ENCODE measurements at regions of chr22 and their contacts with region 1.

Region 1: DNA sequence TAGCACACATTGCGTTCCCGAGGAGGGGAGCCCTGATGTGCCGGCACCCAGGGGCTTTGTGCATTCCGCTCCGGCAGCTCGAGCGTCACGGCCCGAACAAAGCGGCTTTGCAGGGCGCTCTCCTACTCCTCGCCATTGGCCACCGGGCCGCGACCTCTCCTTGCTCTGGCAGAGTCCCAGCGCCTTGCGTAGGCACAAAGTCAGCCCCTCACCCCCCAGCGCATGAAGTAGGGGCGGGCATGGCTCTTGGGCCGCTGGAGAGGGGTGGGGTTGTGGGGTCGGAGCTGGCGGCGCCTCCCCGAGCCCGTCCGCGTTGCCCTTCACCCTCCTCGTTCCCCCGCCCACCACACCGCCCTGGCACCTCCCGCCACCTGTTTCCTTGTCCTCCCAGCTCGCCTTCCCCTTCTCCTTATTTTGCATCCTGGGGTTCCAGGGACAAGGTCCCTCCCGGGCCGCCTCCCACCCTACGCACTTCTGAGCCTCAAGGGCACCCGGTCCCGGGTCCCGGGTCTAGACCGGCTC is 753 bp upstream of the PPARA start:
- DNase-seq: no peak

Region 2: GRCh38 chr22:45977003-45977411 is 172.6 kb before region 1 on chr22 and contains the start of gene WNT7B:
- in situ Hi-C with region 1: no loop called
- DNase-seq: peak; percentile 84
- total RNA-seq, gene WNT7B: 89.1 and 95.0 TPM in 2 replicates

Region 3: DNA sequence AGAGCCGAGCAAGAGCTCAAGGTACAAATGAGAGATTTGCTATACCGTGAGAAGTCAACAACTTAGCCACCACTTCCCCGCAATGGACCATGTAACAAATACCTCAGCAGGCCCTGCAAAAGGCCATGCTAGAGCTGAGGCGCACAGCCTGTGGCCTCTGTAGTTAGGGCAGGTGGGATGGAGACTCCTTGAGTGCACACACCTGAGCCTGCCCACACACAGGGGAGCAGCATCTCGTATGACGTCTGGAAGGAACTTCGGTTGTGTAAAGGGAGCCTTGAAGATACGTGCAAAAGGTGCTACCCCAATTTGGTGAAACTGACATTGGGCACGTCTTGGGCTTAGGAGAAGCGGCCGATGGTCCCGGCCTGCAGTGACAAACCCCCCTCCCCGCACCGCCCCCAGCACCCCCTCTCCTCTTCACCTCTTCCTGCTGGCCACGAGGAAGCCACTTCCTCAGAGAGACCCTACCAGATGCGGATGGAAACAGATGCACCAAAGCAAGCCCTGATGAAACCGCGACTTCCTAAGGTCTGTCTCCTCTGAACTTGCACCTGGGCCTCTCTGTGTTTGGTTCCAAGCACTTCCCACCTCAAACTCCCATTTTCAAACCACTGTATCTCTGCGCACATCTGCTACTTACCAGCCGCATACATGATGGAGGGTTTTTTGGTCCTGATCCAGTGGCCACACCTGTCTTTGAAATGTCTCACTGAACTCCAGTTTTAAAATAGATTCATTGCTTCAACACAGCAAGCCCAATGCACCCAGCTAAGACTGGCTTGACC is 89.9 kb after region 1 on chr22:
- in situ Hi-C with region 1: no loop called
- DNase-seq: no peak

Region 4: GRCh38 chr22:46250035-46250782 is 100.6 kb after region 1 on chr22 and contains the start of gene CDPF1:
- in situ Hi-C with region 1: loop called (anchors 25 kb)
- DNase-seq: peak; percentile 88
- total RNA-seq, gene CDPF1: 31.3 and 64.4 TPM in 2 replicates

Region 5: GRCh38 chr22:46309526-46310085 is 160.0 kb after region 1 on chr22:
- in situ Hi-C with region 1: no loop called
- DNase-seq: no peak

Region 6: GRCh38 chr22:46335201-46336118 is 185.9 kb after region 1 on chr22 and contains the start of gene TRMU:
- in situ Hi-C with region 1: loop called (anchors 10 kb)
- DNase-seq: peak; percentile 82
- total RNA-seq, gene TRMU: 63.2 and 65.1 TPM in 2 replicates

Region 7: GRCh38 chr22:46432164-46433068 is 282.8 kb after region 1 on chr22:
- in situ Hi-C with region 1: loop called (anchors 25 kb)
- DNase-seq: no peak

Measured in Caki2 (cell line).